Posterior cingulate gyrus (tissue), 11 donors: ENCODE measurements at regions of chr11 and their contacts with region 1.

Region 1: DNA sequence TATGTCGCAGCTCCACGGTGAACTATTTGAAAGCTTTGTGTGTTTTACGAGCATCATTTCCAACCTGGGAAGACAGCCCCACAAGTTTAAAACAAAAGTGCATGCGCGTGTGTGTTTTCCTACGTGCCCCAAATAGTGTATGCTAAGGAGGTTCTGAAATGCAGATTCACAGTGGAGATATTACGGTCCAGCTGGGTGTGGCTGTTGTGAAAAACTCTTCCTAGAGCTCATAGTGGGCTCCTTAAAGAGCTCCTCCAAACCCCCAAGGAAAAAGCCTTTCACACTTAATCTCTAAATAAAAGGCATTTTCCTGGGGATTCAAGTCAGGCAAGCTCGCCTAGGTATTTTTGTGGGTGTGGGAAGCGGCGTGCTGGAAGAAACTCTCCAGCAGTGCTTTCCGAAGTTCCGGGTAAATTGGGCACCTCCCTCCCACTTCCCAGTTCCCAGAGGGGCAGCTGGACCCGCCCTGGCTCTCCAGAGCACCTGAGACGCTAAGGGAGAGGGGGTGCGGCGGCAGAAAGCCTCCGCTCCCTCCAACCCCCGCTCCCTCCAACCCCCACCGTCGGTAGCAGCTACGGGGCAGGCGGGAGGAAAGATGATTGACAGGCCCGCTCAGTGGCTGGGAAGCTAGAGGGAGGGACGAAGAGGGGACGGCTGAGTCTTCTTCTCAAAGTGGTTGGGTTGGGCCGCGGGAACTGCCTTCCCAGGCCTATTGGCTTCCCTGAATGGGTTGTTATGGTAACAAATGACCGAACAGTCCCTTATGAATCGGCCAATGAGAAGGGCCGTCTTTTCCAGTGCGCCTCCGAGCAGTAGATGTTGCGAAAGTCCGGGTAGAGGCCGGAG is 558 bp upstream of the PCF11 start:
- DNase-seq: peak; percentile 96 to 100 (median 98)

Region 2: DNA sequence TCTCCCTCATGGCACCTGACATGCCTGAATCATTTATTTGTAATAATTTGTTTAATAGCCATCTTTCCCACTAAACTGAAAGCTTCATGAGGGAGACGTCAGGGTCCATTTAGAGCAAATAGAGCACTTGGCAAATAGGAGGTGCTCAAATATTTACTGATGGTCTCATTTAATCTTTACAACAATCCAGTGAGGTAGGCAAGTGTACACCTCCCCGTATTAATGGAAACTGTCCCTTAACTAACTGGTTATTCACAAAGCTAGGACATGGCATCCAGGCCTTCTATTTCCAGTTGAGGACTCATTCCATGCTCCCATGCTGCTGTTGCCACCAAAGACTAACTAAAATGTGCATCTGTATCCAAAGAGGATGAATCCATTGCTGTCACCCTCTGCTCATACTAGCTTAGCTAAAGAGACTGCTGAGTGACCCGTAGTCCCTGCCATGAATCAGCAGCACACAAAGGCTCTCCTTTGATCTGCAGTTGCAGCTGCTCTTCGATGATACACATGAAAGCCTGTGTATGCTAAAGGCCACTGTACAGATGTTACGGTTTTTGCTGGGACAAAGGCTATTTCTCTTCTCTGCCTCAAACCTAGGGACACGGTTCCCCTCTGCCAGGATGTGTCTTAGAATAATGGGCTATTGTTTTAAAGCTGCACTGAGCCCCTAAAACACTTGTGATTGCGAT is 167.3 kb before region 1 on chr11:
- intact Hi-C with region 1: loop called (anchors 5 kb)
- DNase-seq: peak in 8 of 10 donors; percentile 40 to 94 (median 61)

Region 3: GRCh38 chr11:83193315-83194280 is 37.2 kb after region 1 on chr11 and contains the start of gene ANKRD42:
- intact Hi-C with region 1: loop called (anchors 5 kb)
- DNase-seq: peak; percentile 85 to 99 (median 93)

Region 4: GRCh38 chr11:83410605-83411565 is 254.5 kb after region 1 on chr11:
- intact Hi-C with region 1: no loop called
- DNase-seq: no peak